ENCODE measurements at regions of chr19 and their contacts with region 1.

Region 1: DNA sequence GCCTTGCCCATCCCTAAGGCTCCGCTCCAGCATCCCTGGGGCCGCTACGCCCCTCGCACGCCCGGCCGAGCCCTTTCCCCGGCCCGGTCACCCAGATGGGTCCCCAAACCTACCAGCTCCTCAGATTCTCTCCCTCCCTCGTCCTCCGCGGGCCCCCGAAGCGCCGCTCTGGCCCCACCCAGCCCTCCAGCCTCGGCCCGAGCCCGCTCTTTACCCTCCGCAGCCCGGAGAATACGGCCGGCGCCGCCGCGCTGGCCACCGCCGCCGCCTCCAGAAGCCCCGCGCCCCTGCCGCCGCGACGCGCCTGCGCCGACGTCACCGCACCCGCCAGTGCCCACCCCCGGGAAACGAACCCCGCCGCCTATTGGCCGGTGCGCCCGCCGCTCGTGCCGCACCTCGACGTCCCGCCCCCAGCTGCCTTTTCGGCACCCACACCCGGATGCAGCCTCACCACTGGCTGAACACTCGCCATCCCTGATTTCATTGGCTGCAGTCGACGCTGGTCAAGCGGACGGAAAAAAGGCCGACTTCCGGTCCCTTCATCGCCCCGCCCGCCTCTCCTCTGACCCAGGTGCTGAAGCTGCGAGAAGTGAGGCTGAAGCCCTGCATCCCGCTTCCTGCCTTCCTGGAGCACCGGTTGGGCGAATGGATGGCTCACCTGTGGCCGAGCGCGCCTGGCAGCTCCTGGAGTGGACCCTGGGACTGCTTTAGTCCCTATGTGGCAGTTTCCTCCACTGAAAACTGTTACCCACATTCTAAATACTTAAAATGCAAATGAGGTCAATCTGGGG is at the start of gene DAPK3:
- DNase-seq: peak; percentile 94 to 98 (median 96)
- ATAC-seq: peak; percentile 91
- H3K4me3 ChIP-seq: peak within 1 kb of the TSS; percentile 94
- H3K27ac ChIP-seq: peak within 1 kb of the TSS; percentile 76
- H3K4me1 ChIP-seq: peaks cover 15 to 29% of the 10 kb centered on the region in 2 experiments
- H3K27me3 ChIP-seq: no peaks in the 10 kb centered on the region
- CTCF ChIP-seq: 0 out of 6 replicates have a peak, but pooled peaks of 1 of the 3 experiments have one; percentile 3
- EP300 ChIP-seq: no peak
- POLR2A ChIP-seq: peak; percentile 57
- RAD21 ChIP-seq: no peak
- polyA plus RNA-seq, gene DAPK3: 0.14 to 0.21 TPM

Region 2: DNA sequence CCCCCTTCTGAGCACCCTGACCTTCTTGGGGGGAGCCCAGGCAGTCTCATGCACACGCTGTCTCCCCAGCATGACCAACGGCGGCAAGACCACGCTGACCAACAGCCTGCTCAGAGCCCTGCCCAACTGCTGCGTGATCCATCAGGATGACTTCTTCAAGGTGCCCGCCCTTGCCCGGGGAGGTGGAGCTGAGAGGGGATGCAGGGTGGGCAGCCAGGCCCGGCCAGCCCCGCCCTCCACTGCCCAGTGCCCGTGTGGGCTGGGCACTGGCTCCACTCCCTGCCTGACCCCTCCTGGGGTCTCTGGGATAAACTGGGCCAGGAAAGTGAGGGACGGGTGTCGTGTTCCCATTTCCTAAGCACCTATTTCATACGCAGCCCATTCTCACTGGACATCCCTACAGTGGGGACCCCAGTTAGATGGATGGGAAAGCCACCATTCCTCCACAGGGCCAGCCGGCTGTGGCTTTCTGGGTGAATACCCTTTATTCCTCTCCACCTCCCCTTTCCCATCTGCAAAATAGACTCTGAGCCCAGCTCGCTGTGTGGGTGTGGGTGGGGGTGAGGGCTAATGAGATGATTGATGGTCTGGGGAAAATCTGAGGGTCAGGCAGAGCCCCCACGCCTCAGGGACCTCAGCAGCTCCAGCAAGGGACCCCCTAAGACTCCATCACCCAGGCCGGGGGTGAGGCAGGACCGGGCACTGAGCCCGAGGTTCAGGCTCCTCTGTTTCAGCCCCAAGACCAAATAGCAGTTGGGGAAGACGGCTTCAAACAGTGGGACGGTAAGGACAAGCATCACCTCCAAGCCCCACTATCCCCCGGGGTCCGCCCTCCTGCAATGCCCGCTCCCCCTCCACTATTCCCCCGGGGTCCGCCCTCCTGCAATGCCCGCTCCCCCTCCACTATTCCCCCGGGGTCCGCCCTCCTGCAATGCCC is 34.2 kb before region 1 on chr19:
- CTCF ChIA-PET with region 1: no interaction called
- POLR2A ChIA-PET with region 1: no interaction called
- in situ Hi-C with region 1: no loop called
- intact Hi-C with region 1: no loop called
- DNase-seq: no peak
- ATAC-seq: no peak
- H3K4me3 ChIP-seq: no peak overlapping the region
- H3K27ac ChIP-seq: no peak overlapping the region
- H3K4me1 ChIP-seq: peaks cover 0 to 23% of the 10 kb centered on the region in 2 experiments; a peak in 2 of 5 replicates
- H3K27me3 ChIP-seq: peaks cover 0 to 11% of the 10 kb centered on the region in 2 experiments; a peak in 3 of 5 replicates
- CTCF ChIP-seq: no peak
- EP300 ChIP-seq: no peak
- POLR2A ChIP-seq: no peak
- RAD21 ChIP-seq: no peak

Region 3: GRCh38 chr19:3955688-3956087 is 15.3 kb before region 1 on chr19:
- CTCF ChIA-PET with region 1: no interaction called
- POLR2A ChIA-PET with region 1: interaction called, 17 read pairs
- in situ Hi-C with region 1: no loop called
- intact Hi-C with region 1: no loop called
- DNase-seq: no peak
- ATAC-seq: no peak
- H3K4me3 ChIP-seq: no peak overlapping the region
- H3K27ac ChIP-seq: no peak overlapping the region
- H3K4me1 ChIP-seq: peaks cover 23 to 57% of the 10 kb centered on the region in 2 experiments
- H3K27me3 ChIP-seq: no peaks in the 10 kb centered on the region
- CTCF ChIP-seq: no peak
- EP300 ChIP-seq: no peak
- POLR2A ChIP-seq: no peak
- RAD21 ChIP-seq: no peak

Region 4: GRCh38 chr19:4007021-4007835 is 36.2 kb after region 1 on chr19 and contains the start of gene PIAS4:
- CTCF ChIA-PET with region 1: no interaction called
- POLR2A ChIA-PET with region 1: no interaction called
- in situ Hi-C with region 1: no loop called
- intact Hi-C with region 1: loop called (anchors 2 kb)
- DNase-seq: peak; percentile 98 to 100 (median 100)
- ATAC-seq: peak; percentile 96
- H3K4me3 ChIP-seq: peak within 1 kb of the TSS; percentile 90
- H3K27ac ChIP-seq: peak within 1 kb of the TSS; percentile 84
- H3K4me1 ChIP-seq: peaks cover 22 to 56% of the 10 kb centered on the region in 2 experiments; a peak in 4 of 5 replicates
- H3K27me3 ChIP-seq: no peaks in the 10 kb centered on the region
- CTCF ChIP-seq: no peak
- EP300 ChIP-seq: no peak
- POLR2A ChIP-seq: peak; percentile 72
- RAD21 ChIP-seq: no peak
- polyA plus RNA-seq, gene PIAS4: 0.27 TPM

Measured in K562 (cell line).